ENCODE measurements at regions of chr10 and their contacts with region 1.

Region 1: GRCh38 chr10:53434413-53434812 is 661.8 kb upstream of the MBL2 start:
- DNase-seq: no peak
- H3K4me3 ChIP-seq: no peak overlapping the region
- H3K27ac ChIP-seq: no peak overlapping the region
- H3K4me1 ChIP-seq: no peaks in the 10 kb centered on the region
- H3K27me3 ChIP-seq: no peaks in the 10 kb centered on the region
- CTCF ChIP-seq: no peak

Region 2: GRCh38 chr10:53298443-53298842 is 136.0 kb before region 1 on chr10:
- intact Hi-C with region 1: loop called (anchors 5 kb)
- DNase-seq: no peak
- H3K4me3 ChIP-seq: no peak overlapping the region
- H3K27ac ChIP-seq: no peak overlapping the region
- H3K4me1 ChIP-seq: no peaks in the 10 kb centered on the region
- H3K27me3 ChIP-seq: no peaks in the 10 kb centered on the region
- CTCF ChIP-seq: no peak

Region 3: GRCh38 chr10:53570221-53570620 is 135.8 kb after region 1 on chr10:
- intact Hi-C with region 1: no loop called
- DNase-seq: no peak
- H3K4me3 ChIP-seq: no peak overlapping the region
- H3K27ac ChIP-seq: no peak overlapping the region
- H3K4me1 ChIP-seq: no peaks in the 10 kb centered on the region
- H3K27me3 ChIP-seq: no peaks in the 10 kb centered on the region
- CTCF ChIP-seq: no peak